GM12878 (cell line): ENCODE measurements at regions of chr15 and their contacts with region 1.

Region 1: DNA sequence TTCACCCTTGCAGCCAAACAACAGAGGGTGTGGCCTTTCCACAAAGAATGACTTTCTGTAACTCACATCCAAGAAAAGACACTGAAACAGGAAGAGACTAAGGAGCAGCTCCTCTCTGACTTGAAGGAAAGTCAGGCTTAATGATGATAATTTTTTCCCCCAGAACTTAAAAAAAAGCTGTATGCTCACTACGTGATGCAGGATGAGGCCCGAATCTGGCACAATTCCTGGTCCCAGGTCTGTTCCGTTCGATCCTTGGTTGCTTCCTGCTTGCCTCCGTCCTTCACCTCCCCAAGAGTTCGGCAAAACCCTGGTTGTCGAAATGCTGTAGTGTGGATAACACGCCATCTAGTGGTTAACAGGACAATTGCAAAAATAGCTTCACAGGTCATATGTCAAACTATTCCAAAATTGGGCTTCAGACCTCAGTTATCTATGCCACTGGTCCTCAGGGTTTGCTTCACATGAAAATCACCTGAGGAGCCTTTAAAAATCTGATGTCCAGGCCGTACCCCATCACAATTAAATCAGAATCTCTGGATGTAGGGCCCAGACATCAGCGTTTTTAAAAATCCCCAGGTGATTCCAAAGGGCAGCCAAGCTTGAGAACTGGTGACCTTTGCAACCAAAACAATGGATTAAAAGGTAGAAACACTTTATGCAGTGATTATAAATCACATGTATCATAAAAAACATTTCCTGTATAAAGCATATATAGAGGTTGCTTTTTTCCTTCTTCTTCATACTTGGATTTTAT is 28.1 kb upstream of the SYNM start:
- DNase-seq: peak; percentile 74
- ATAC-seq: peak; percentile 90
- H3K4me3 ChIP-seq: peak overlapping the region; percentile 46
- H3K27ac ChIP-seq: peak overlapping the region; percentile 47
- H3K4me1 ChIP-seq: peaks cover 7% of the 10 kb centered on the region
- H3K27me3 ChIP-seq: no peaks in the 10 kb centered on the region
- CTCF ChIP-seq: peak; percentile 82 to 94 (median 93)
- EP300 ChIP-seq: no peak
- POLR2A ChIP-seq: no peak
- RAD21 ChIP-seq: peak; percentile 99

Region 2: GRCh38 chr15:98647774-98648653 is 428.7 kb before region 1 on chr15 and contains the start of gene IGF1R:
- CTCF ChIA-PET with region 1: interaction called, 6 read pairs
- POLR2A ChIA-PET with region 1: no interaction called
- RAD21 ChIA-PET with region 1: interaction called, 4 read pairs
- SMC1A ChIA-PET with region 1: no interaction called
- in situ Hi-C with region 1: loop called (anchors 10 kb)
- intact Hi-C with region 1: loop called (anchors 5 kb)
- DNase-seq: no peak
- ATAC-seq: peak; percentile 73
- H3K4me3 ChIP-seq: peak within 1 kb of the TSS; percentile 85
- H3K27ac ChIP-seq: no peak within 1 kb of the TSS
- H3K4me1 ChIP-seq: no peaks in the 10 kb centered on the region; the same call in 1 of the 2 replicates
- H3K27me3 ChIP-seq: peaks cover 14 to 29% of the 10 kb centered on the region in 2 experiments
- CTCF ChIP-seq: no peak
- EP300 ChIP-seq: no peak
- POLR2A ChIP-seq: peak; percentile 23; the same call in 1 of the 2 replicates
- RAD21 ChIP-seq: no peak
- polyA plus RNA-seq, gene IGF1R: 0.03 to 0.11 TPM

Region 3: GRCh38 chr15:98853161-98853560 is 223.6 kb before region 1 on chr15:
- CTCF ChIA-PET with region 1: interaction called, 15 read pairs
- POLR2A ChIA-PET with region 1: no interaction called
- RAD21 ChIA-PET with region 1: interaction called, 7 read pairs
- SMC1A ChIA-PET with region 1: interaction called, 7 read pairs
- in situ Hi-C with region 1: no loop called
- intact Hi-C with region 1: no loop called
- DNase-seq: peak; percentile 50
- ATAC-seq: peak; percentile 75
- H3K4me3 ChIP-seq: peak overlapping the region; percentile 77
- H3K27ac ChIP-seq: no peak overlapping the region
- H3K4me1 ChIP-seq: peaks cover 14% of the 10 kb centered on the region
- H3K27me3 ChIP-seq: no peaks in the 10 kb centered on the region
- CTCF ChIP-seq: no peak
- EP300 ChIP-seq: no peak
- POLR2A ChIP-seq: no peak
- RAD21 ChIP-seq: no peak

Region 4: GRCh38 chr15:98954411-98954810 is 122.3 kb before region 1 on chr15:
- CTCF ChIA-PET with region 1: interaction called, 15 read pairs
- POLR2A ChIA-PET with region 1: no interaction called
- RAD21 ChIA-PET with region 1: interaction called, 17 read pairs
- SMC1A ChIA-PET with region 1: interaction called, 12 read pairs
- in situ Hi-C with region 1: no loop called
- intact Hi-C with region 1: loop called (anchors 5 kb)
- DNase-seq: peak; percentile 24
- ATAC-seq: no peak
- H3K4me3 ChIP-seq: no peak overlapping the region
- H3K27ac ChIP-seq: no peak overlapping the region
- H3K4me1 ChIP-seq: peaks cover 25% of the 10 kb centered on the region
- H3K27me3 ChIP-seq: no peaks in the 10 kb centered on the region
- CTCF ChIP-seq: no peak
- EP300 ChIP-seq: no peak
- POLR2A ChIP-seq: no peak
- RAD21 ChIP-seq: no peak

Region 5: DNA sequence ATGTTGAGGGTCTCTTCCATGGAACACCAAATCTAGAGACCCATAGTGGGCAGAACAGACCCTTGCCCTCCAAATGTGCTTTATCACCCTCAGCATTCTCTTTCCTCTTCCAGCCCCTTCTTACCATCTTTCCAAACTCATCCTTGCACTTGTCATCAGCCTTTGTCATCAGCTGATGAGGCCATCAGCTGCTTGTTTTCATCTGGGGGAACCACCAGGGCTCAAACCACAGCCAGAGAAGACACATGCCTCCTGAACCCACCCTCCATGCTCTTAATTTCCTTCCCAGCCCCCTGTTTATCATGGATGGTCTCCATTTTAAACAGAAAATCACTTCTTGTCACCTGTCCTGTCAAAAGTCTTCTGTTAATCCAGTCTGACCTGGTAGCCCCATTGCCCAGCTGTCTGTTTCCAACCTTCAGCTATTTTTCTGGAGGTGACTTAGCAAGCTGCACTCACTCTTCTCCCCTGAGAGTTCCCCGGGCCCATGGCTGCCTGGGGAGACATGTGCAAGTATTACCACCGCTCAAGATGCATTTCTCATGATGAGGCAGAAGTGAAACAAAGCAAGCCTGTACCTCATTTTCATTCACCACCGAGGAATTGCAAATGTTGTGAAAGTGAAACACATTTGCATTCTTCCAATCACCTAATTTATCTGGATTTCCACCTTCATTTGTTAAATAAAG is 13.4 kb after region 1 on chr15:
- CTCF ChIA-PET with region 1: interaction called, 60 read pairs
- POLR2A ChIA-PET with region 1: interaction called, 4 read pairs
- RAD21 ChIA-PET with region 1: interaction called, 11 read pairs
- SMC1A ChIA-PET with region 1: interaction called, 62 read pairs
- in situ Hi-C with region 1: no loop called
- intact Hi-C with region 1: no loop called
- DNase-seq: peak; percentile 90
- ATAC-seq: peak; percentile 100
- H3K4me3 ChIP-seq: peak overlapping the region; percentile 9; the same call in 1 of the 2 replicates
- H3K27ac ChIP-seq: peak overlapping the region; percentile 70
- H3K4me1 ChIP-seq: peaks cover 18% of the 10 kb centered on the region
- H3K27me3 ChIP-seq: no peaks in the 10 kb centered on the region
- CTCF ChIP-seq: no peak
- EP300 ChIP-seq: peak; percentile 74 to 83; a peak in 3 of 4 replicates
- POLR2A ChIP-seq: no peak
- RAD21 ChIP-seq: no peak